A549 (cell line): ENCODE measurements at regions of chr5 and their contacts with region 1.

Region 1: GRCh38 chr5:32076699-32077695 is 97.1 kb downstream of the GOLPH3 start:
- DNase-seq: peak; percentile 31 to 62
- ATAC-seq: peak in 1 of 2 experiments; percentile 76; a peak in 4 of 6 replicates
- H3K4me3 ChIP-seq: no peak overlapping the region
- H3K27ac ChIP-seq: peak overlapping the region in 1 of 2 experiments; percentile 21; a peak in 1 of 6 replicates
- H3K4me1 ChIP-seq: no peaks in the 10 kb centered on the region; the same call in 2 of the 3 replicates
- CTCF ChIP-seq: peak; percentile 95
- EP300 ChIP-seq: no peak
- POLR2A ChIP-seq: no peak
- RAD21 ChIP-seq: peak; percentile 96 to 98

Region 2: GRCh38 chr5:31825518-31826068 is 251.4 kb before region 1 on chr5:
- CTCF ChIA-PET with region 1: interaction called, 241 read pairs
- POLR2A ChIA-PET with region 1: no interaction called
- DNase-seq: peak; percentile 36 to 63
- ATAC-seq: peak; percentile 94 to 97
- H3K4me3 ChIP-seq: no peak overlapping the region
- H3K27ac ChIP-seq: peak overlapping the region in 1 of 2 experiments; percentile 21; a peak in 1 of 6 replicates
- H3K4me1 ChIP-seq: peaks cover 5% of the 10 kb centered on the region; the same call in 1 of the 3 replicates
- CTCF ChIP-seq: peak; percentile 88
- EP300 ChIP-seq: no peak
- POLR2A ChIP-seq: no peak
- RAD21 ChIP-seq: peak; percentile 85 to 91

Region 3: DNA sequence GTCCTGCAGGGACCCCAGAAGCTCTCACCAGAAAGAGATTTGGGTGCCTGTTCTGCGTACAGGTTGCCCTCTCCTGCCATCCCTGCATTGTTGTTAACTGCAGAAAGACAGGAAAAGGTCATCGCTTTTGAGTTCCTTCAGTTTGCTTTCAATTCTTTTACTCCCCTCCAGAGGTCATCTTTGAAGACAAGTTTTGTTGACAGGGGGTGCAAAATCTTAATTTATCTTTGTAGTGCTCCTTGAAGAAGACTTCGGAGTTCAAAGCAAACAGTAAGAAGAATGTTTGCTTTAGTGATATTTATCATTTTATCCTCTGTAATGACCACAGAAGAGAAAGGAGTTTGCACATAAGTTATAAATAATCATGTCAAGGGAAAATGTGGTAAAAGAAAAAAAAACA is 238.0 kb before region 1 on chr5:
- CTCF ChIA-PET with region 1: interaction called, 15 read pairs
- POLR2A ChIA-PET with region 1: no interaction called
- DNase-seq: no peak
- ATAC-seq: no peak
- H3K4me3 ChIP-seq: no peak overlapping the region
- H3K27ac ChIP-seq: no peak overlapping the region
- H3K4me1 ChIP-seq: no peaks in the 10 kb centered on the region
- CTCF ChIP-seq: no peak
- EP300 ChIP-seq: no peak
- POLR2A ChIP-seq: no peak
- RAD21 ChIP-seq: no peak

Region 4: DNA sequence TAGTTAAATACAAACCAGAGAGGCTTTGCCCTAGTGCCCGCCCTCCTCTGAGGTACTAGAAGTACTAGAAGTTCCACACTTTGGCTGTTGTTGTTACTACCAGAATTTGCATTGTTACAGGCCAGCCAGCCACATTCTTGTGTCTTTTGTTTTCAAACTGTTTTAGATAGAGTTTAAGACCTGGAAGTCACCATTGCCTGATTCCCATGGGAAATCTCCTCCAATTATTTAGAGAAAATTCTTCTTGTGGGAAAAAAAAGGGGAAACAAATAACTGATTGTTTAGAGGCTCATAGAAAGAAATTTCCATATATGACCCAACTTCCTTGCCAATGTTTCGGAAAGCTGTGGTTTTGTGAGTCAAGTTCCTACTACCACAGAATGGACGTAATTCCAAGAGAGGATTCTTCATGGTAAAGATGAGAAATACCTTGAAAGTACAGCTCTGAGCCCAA is 155.1 kb before region 1 on chr5:
- CTCF ChIA-PET with region 1: interaction called, 82 read pairs
- POLR2A ChIA-PET with region 1: interaction called, 3 read pairs
- DNase-seq: no peak
- ATAC-seq: no peak
- H3K4me3 ChIP-seq: no peak overlapping the region
- H3K27ac ChIP-seq: no peak overlapping the region
- H3K4me1 ChIP-seq: no peaks in the 10 kb centered on the region
- CTCF ChIP-seq: no peak
- EP300 ChIP-seq: no peak
- POLR2A ChIP-seq: no peak
- RAD21 ChIP-seq: no peak

Region 5: GRCh38 chr5:32017692-32018367 is 59.2 kb before region 1 on chr5:
- CTCF ChIA-PET with region 1: interaction called, 10 read pairs
- POLR2A ChIA-PET with region 1: no interaction called
- DNase-seq: no peak
- ATAC-seq: peak; percentile 23 to 24; a peak in 3 of 6 replicates
- H3K4me3 ChIP-seq: no peak overlapping the region
- H3K27ac ChIP-seq: peak overlapping the region in 1 of 2 experiments; percentile 34; a peak in 1 of 6 replicates
- H3K4me1 ChIP-seq: no peaks in the 10 kb centered on the region
- CTCF ChIP-seq: no peak
- EP300 ChIP-seq: no peak
- POLR2A ChIP-seq: no peak
- RAD21 ChIP-seq: no peak

Region 6: DNA sequence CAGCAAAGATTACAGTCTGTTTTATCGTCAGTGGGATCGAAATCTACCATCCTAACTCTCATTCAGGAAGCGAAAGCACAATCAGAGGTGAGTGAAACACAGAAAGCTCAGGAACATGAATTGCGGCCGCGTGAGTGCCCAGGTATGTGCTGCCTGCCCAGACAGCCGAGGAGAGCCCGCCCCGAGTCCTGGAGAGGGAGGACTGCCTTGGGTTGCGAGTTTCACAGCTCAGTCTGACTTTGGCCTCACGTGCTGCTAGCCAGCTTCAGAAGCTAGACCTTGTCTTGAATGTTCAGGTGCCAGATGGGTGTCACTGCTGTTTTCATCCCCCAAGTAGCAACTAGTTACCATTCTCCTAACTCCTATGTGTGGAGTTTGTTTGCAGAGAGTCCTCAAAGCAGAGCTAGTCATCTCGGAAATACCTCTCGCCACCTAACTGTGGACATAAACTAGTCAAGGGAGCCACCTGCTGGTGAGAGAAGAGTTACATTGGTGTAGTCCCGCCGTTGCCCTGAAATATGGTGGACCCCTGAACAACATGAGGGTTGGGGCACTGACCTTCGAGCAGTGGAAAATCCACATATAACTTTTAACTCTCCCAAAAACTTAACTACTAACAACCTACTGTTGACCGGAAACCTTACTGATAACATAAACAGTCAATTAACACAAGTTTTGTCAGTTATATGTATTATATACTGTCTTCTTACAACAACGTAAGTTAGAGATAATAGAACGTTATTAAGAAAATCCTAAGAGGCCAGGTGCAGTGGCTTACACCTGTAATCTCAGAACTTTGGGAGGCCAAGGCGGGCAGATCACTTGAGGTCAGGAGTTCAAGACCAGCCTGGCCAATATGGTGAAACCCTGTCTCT is 16.2 kb after region 1 on chr5:
- CTCF ChIA-PET with region 1: interaction called, 26 read pairs
- POLR2A ChIA-PET with region 1: interaction called, 4 read pairs
- DNase-seq: peak; percentile 77 to 78
- ATAC-seq: peak; percentile 96
- H3K4me3 ChIP-seq: no peak overlapping the region
- H3K27ac ChIP-seq: no peak overlapping the region
- H3K4me1 ChIP-seq: 0 out of 3 replicates have a peak, but pooled peaks cover 3% of the 10 kb centered on the region
- CTCF ChIP-seq: peak; percentile 88
- EP300 ChIP-seq: no peak
- POLR2A ChIP-seq: no peak
- RAD21 ChIP-seq: peak; percentile 90 to 94

Region 7: DNA sequence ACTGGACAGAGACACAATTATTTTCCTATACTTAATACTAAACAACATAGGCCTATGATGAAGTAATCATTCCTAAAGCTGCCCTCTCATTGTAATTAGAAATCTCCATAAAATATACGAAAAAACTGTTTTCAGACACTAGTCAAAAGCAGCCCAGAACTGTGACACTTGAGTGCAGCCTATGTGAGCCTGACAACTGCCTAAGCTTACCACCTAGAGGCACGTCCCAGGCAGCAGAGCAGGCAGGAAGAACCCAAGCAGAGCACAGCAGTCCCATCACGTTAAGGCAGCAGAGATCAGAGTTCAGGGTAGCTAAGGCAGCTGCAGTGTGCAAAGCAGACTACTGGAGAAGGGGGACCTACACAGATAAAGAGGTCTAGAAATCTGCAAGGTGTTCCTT is 50.7 kb after region 1 on chr5:
- CTCF ChIA-PET with region 1: no interaction called
- POLR2A ChIA-PET with region 1: no interaction called
- DNase-seq: no peak
- ATAC-seq: no peak
- H3K4me3 ChIP-seq: no peak overlapping the region
- H3K27ac ChIP-seq: no peak overlapping the region
- H3K4me1 ChIP-seq: peaks cover 7% of the 10 kb centered on the region; the same call in 1 of the 3 replicates
- CTCF ChIP-seq: no peak
- EP300 ChIP-seq: no peak
- POLR2A ChIP-seq: no peak
- RAD21 ChIP-seq: no peak

Region 8: GRCh38 chr5:32138839-32139493 is 62.0 kb after region 1 on chr5:
- CTCF ChIA-PET with region 1: no interaction called
- POLR2A ChIA-PET with region 1: no interaction called
- DNase-seq: no peak
- ATAC-seq: no peak
- H3K4me3 ChIP-seq: no peak overlapping the region
- H3K27ac ChIP-seq: no peak overlapping the region
- H3K4me1 ChIP-seq: peaks cover 15% of the 10 kb centered on the region
- CTCF ChIP-seq: no peak
- EP300 ChIP-seq: no peak
- POLR2A ChIP-seq: no peak
- RAD21 ChIP-seq: no peak

Region 9: GRCh38 chr5:32329308-32329834 is 252.4 kb after region 1 on chr5:
- CTCF ChIA-PET with region 1: no interaction called
- POLR2A ChIA-PET with region 1: no interaction called
- DNase-seq: peak; percentile 80
- ATAC-seq: peak; percentile 96 to 98
- H3K4me3 ChIP-seq: no peak overlapping the region
- H3K27ac ChIP-seq: 0 out of 6 replicates have a peak overlapping the region, but pooled peaks of 1 of the 2 experiments have one; percentile 34
- H3K4me1 ChIP-seq: peaks cover 3% of the 10 kb centered on the region; the same call in 1 of the 3 replicates
- CTCF ChIP-seq: peak; percentile 79
- EP300 ChIP-seq: no peak
- POLR2A ChIP-seq: no peak
- RAD21 ChIP-seq: peak; percentile 86 to 93